Stomach (tissue), 19 donors: ENCODE measurements at regions of chr10 and their contacts with region 1.

Region 1: GRCh38 chr10:60099998-60100747 is 193.8 kb upstream of the CCDC6 start:
- DNase-seq: peak in 1 of 2 donors; percentile 83
- H3K4me3 ChIP-seq: no peak overlapping the region
- H3K27ac ChIP-seq: no peak overlapping the region
- H3K4me1 ChIP-seq: peaks cover 0 to 14% (median 4%) of the 10 kb centered on the region in 4 donors
- H3K27me3 ChIP-seq: no peaks in the 10 kb centered on the region
- CTCF ChIP-seq: peak in 5 of 7 experiments; percentile 18 to 61 (median 53)
- EP300 ChIP-seq: no peak
- POLR2A ChIP-seq: no peak

Region 2: DNA sequence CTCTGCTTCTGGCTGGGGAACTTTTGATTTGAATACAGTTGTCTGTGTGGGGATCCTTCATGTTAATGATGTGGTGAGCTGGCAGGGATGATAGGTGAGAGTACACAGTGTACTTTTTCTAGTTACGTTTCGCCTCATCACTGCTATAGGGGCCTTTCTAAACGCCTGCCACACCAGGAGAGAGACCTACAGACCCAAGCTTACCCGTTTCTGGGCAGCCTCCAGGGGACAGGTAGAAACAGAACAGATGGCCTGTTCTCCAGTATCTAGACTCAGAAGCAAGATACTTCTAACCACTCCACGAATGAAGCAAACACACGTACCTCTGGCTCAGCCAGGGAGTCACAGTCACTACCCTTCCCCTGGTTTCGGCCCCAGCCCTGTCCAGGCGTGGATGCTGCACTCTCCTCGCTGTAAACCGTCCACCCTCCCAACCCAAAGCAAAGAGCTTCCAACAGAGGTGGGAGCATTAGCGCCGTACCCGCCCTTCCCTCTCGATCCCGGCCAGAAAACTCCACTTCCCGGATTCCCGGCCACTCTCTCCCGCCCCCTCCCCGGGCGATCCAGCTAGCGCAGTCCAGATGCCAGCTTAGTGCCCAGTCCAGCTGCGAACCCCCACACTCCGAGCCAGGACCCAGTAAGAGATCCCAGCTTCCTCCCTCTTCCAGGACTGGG is 195.0 kb before region 1 on chr10:
- intact Hi-C with region 1: no loop called
- DNase-seq: peak; percentile 46 to 82
- H3K4me3 ChIP-seq: peak overlapping the region; percentile 79 to 96 (median 87)
- H3K27ac ChIP-seq: peak overlapping the region; percentile 83 to 97 (median 96)
- H3K4me1 ChIP-seq: peaks cover 28 to 70% (median 56%) of the 10 kb centered on the region in 4 donors
- H3K27me3 ChIP-seq: no peaks in the 10 kb centered on the region
- CTCF ChIP-seq: no peak
- EP300 ChIP-seq: no peak
- POLR2A ChIP-seq: no peak

Region 3: GRCh38 chr10:60323162-60323561 is 223.0 kb after region 1 on chr10:
- intact Hi-C with region 1: no loop called
- DNase-seq: peak in 1 of 2 donors; percentile 62
- H3K4me3 ChIP-seq: no peak overlapping the region
- H3K27ac ChIP-seq: no peak overlapping the region
- H3K4me1 ChIP-seq: no peaks in the 10 kb centered on the region
- H3K27me3 ChIP-seq: no peaks in the 10 kb centered on the region
- CTCF ChIP-seq: no peak
- EP300 ChIP-seq: no peak
- POLR2A ChIP-seq: no peak

Region 4: DNA sequence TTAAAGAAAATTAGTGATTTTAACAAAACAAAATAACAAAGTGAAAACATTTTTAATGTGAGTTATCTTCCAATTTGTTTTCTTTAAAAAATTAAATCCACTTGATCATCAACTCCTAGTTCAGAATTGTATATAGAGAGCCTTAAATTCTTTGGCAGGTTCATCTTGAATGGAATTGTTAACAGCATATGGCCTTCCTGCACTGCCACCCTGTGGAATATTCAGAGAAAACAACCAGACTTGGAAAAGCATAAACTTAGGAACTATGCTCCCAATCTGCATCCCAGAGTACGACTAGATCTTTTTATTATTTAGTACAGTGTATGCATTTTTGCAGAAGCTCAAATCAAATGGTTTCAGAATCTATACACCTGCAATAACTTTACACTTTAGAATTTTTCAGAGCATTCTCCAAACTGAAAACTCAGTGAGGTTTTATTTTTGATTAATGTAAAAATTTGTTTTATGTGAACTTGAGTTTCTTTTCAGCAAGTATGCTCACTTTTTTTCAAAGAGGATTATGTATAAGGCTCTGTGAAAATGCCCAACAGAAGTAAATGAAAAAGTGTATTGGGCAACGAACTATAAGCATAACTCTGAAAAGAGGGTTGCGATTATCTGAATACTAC is 334.4 kb after region 1 on chr10:
- intact Hi-C with region 1: loop called (anchors 10 kb)
- DNase-seq: peak in 1 of 2 donors; percentile 86
- H3K4me3 ChIP-seq: no peak overlapping the region
- H3K27ac ChIP-seq: no peak overlapping the region
- H3K4me1 ChIP-seq: peaks cover 0 to 11% (median 0%) of the 10 kb centered on the region in 4 donors
- H3K27me3 ChIP-seq: no peaks in the 10 kb centered on the region
- CTCF ChIP-seq: peak in 5 of 7 experiments; percentile 49 to 71 (median 63)
- EP300 ChIP-seq: no peak
- POLR2A ChIP-seq: no peak